HCT116 (cell line): ENCODE measurements at regions of chr5 and their contacts with region 1.

Region 1: GRCh38 chr5:43040287-43041098 is at the start of gene ANXA2R:
- DNase-seq: peak; percentile 92
- ATAC-seq: peak; percentile 59
- H3K4me3 ChIP-seq: peak within 1 kb of the TSS; percentile 58 to 65
- H3K27ac ChIP-seq: peak within 1 kb of the TSS; percentile 81
- H3K4me1 ChIP-seq: peaks cover 0 to 39% of the 10 kb centered on the region in 2 experiments; a peak in 3 of 4 replicates
- H3K27me3 ChIP-seq: no peaks in the 10 kb centered on the region
- CTCF ChIP-seq: peak; percentile 70 to 77 (median 76)
- POLR2A ChIP-seq: no peak
- RAD21 ChIP-seq: peak; percentile 77
- total RNA-seq, gene ANXA2R: 0.37 TPM

Region 2: GRCh38 chr5:43019614-43020293 is 20.7 kb before region 1 on chr5:
- CTCF ChIA-PET with region 1: interaction called, 38 read pairs
- POLR2A ChIA-PET with region 1: interaction called, 6 read pairs
- RAD21 ChIA-PET with region 1: interaction called in 1 of 2 experiments, 3 read pairs
- intact Hi-C with region 1: loop called (anchors 2 kb)
- DNase-seq: peak; percentile 87
- ATAC-seq: peak; percentile 81
- H3K4me3 ChIP-seq: peak overlapping the region; percentile 67 to 68
- H3K27ac ChIP-seq: no peak overlapping the region
- H3K4me1 ChIP-seq: peaks cover 4 to 27% of the 10 kb centered on the region in 2 experiments; a peak in 3 of 4 replicates
- H3K27me3 ChIP-seq: no peaks in the 10 kb centered on the region
- CTCF ChIP-seq: peak; percentile 29 to 65 (median 55); a peak in 5 of 6 replicates
- POLR2A ChIP-seq: no peak
- RAD21 ChIP-seq: peak; percentile 19; the same call in 1 of the 2 replicates

Region 3: GRCh38 chr5:43066799-43067741 is 26.6 kb after region 1 on chr5:
- CTCF ChIA-PET with region 1: interaction called, 9 read pairs
- POLR2A ChIA-PET with region 1: interaction called, 4 read pairs
- RAD21 ChIA-PET with region 1: no interaction called
- intact Hi-C with region 1: loop called (anchors 1 kb)
- DNase-seq: peak; percentile 85
- ATAC-seq: peak; percentile 63
- H3K4me3 ChIP-seq: peak overlapping the region; percentile 76 to 77
- H3K27ac ChIP-seq: peak overlapping the region; percentile 93
- H3K4me1 ChIP-seq: peaks cover 12 to 24% of the 10 kb centered on the region in 2 experiments
- H3K27me3 ChIP-seq: no peaks in the 10 kb centered on the region
- CTCF ChIP-seq: no peak
- POLR2A ChIP-seq: peak; percentile 32
- RAD21 ChIP-seq: no peak

Region 4: GRCh38 chr5:43105369-43106289 is 65.1 kb after region 1 on chr5:
- CTCF ChIA-PET with region 1: no interaction called
- POLR2A ChIA-PET with region 1: no interaction called
- RAD21 ChIA-PET with region 1: interaction called in 1 of 2 experiments, 3 read pairs
- intact Hi-C with region 1: loop called (anchors 1 kb)
- DNase-seq: peak; percentile 92
- ATAC-seq: peak; percentile 95
- H3K4me3 ChIP-seq: peak overlapping the region; percentile 8 to 29; a peak in 3 of 4 replicates
- H3K27ac ChIP-seq: no peak overlapping the region
- H3K4me1 ChIP-seq: peaks cover 0 to 10% of the 10 kb centered on the region in 2 experiments; a peak in 1 of 4 replicates
- H3K27me3 ChIP-seq: no peaks in the 10 kb centered on the region
- CTCF ChIP-seq: peak; percentile 99 to 100 (median 100)
- POLR2A ChIP-seq: no peak
- RAD21 ChIP-seq: peak; percentile 75

Region 5: DNA sequence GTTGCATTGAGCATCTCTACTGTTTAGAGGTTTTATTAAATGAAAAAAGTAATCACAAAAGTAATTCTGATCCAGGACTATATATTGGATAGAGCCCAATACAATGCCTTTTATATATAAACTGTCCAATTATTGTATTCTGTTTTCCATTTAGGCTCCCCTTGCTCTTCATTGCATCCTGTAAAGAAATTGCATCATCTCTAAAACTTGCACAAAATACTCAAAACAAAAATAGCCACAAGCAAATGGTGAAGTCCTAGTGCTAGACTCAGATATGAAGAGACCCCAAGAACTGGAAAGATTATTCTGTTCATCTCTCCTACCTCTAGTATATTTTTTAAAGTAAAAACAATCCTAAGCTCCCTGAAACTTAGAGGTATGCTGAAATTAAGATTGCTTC is 758.2 kb after region 1 on chr5:
- CTCF ChIA-PET with region 1: no interaction called
- POLR2A ChIA-PET with region 1: no interaction called
- RAD21 ChIA-PET with region 1: no interaction called
- intact Hi-C with region 1: loop called (anchors 5 kb)
- DNase-seq: no peak
- ATAC-seq: no peak
- H3K4me3 ChIP-seq: no peak overlapping the region
- H3K27ac ChIP-seq: no peak overlapping the region
- H3K4me1 ChIP-seq: no peaks in the 10 kb centered on the region
- H3K27me3 ChIP-seq: no peaks in the 10 kb centered on the region
- CTCF ChIP-seq: no peak
- POLR2A ChIP-seq: no peak
- RAD21 ChIP-seq: no peak